ENCODE measurements at regions of chr18 and their contacts with region 1.

Region 1: DNA sequence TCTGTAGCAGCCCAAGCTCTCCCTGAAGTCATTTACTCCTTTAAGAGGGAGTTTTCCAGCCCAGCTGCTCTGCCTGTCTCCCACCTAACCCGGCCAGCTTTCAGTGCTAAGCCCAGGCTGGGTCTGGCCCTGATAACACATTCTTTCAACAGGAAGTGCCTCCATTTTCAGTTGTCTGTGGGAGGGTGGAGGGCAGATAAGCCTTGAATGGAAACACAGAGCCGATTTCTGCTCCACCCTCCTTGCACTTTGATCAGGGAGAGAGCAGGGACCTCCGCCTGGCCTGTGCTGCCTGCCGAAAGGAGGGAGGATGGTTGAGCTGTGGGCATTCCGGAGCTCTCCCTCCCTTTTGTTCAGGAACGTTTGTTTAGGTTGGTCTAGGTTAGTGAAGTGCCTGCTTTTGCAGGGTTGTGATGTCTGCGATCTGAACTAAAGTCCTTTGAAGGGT is 24.8 kb downstream of the GATA6 start:
- DNase-seq: no peak
- H3K4me3 ChIP-seq: no peak overlapping the region
- H3K27ac ChIP-seq: no peak overlapping the region
- H3K4me1 ChIP-seq: no peaks in the 10 kb centered on the region
- H3K27me3 ChIP-seq: no peaks in the 10 kb centered on the region
- CTCF ChIP-seq: no peak
- POLR2A ChIP-seq: no peak

Region 2: DNA sequence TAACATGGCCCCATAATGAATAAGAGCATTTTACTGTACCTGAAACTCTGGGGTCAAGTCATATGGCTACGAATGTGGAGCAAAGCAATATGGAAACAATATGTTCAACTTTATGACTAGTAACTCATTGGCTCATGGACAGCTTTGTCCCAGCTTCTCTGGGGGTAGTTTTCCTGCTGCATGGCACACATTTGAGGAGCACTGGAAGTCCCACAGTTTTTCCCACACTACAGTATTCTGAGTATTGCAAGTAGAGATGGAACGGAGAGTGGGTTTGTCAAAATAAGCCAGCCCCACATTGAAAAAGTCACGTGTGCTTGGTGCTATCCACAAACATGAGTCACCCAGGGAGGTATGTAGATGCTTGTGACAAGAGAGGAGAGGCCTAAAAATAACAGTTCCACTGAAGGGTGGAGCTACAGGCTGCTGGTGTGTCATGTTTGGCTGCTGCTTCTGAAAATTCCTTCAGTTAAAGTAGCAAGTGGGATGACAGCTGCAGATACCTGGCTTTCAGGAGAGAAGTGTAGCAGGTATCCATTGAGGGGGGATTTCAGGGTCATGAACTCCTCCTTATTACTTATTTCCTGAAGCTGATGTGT is 271.8 kb after region 1 on chr18:
- intact Hi-C with region 1: loop called (anchors 5 kb)
- DNase-seq: peak; percentile 34
- H3K4me3 ChIP-seq: no peak overlapping the region
- H3K27ac ChIP-seq: no peak overlapping the region
- H3K4me1 ChIP-seq: peaks cover 8% of the 10 kb centered on the region
- H3K27me3 ChIP-seq: no peaks in the 10 kb centered on the region
- CTCF ChIP-seq: no peak
- POLR2A ChIP-seq: no peak

Measured in prostate gland (tissue), 2 donors.